Mammary epithelial cell (primary cell): ENCODE measurements at regions of chr5 and their contacts with region 1.

Region 1: GRCh38 chr5:90529194-90529938 is at the start of gene LYSMD3:
- DNase-seq: peak; percentile 96
- H3K4me3 ChIP-seq: peak within 1 kb of the TSS; percentile 92 to 98 (median 98)
- H3K27ac ChIP-seq: peak within 1 kb of the TSS; percentile 80
- H3K4me1 ChIP-seq: peaks cover 18% of the 10 kb centered on the region
- H3K27me3 ChIP-seq: peaks cover 3% of the 10 kb centered on the region
- CTCF ChIP-seq: no peak
- total RNA-seq, gene LYSMD3: 16.8 to 18.7 TPM

Region 2: DNA sequence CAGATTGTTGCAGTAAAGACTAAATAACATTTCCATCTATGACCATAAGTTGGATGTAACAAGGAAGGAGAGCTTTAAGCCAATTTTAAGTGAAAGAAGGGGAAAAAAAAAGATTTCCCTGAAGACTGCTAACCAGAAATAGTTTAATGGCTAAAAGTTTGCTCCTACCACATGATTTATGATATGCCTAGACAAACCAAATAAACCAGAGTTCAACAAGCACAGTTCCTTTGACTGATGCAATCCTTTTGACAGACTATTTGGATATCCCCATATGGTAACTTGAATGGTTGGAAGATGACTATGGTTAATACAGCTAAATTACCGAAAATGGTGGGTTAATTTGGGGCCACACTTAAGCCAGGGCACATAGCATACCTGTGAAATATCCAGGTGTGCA is 458.3 kb before region 1 on chr5:
- CTCF ChIA-PET with region 1: no interaction called
- dilution Hi-C with region 1: no loop called
- in situ Hi-C with region 1: no loop called
- intact Hi-C with region 1: no loop called
- DNase-seq: no peak
- H3K4me3 ChIP-seq: no peak overlapping the region
- H3K27ac ChIP-seq: no peak overlapping the region
- H3K4me1 ChIP-seq: no peaks in the 10 kb centered on the region
- H3K27me3 ChIP-seq: no peaks in the 10 kb centered on the region
- CTCF ChIP-seq: no peak

Region 3: DNA sequence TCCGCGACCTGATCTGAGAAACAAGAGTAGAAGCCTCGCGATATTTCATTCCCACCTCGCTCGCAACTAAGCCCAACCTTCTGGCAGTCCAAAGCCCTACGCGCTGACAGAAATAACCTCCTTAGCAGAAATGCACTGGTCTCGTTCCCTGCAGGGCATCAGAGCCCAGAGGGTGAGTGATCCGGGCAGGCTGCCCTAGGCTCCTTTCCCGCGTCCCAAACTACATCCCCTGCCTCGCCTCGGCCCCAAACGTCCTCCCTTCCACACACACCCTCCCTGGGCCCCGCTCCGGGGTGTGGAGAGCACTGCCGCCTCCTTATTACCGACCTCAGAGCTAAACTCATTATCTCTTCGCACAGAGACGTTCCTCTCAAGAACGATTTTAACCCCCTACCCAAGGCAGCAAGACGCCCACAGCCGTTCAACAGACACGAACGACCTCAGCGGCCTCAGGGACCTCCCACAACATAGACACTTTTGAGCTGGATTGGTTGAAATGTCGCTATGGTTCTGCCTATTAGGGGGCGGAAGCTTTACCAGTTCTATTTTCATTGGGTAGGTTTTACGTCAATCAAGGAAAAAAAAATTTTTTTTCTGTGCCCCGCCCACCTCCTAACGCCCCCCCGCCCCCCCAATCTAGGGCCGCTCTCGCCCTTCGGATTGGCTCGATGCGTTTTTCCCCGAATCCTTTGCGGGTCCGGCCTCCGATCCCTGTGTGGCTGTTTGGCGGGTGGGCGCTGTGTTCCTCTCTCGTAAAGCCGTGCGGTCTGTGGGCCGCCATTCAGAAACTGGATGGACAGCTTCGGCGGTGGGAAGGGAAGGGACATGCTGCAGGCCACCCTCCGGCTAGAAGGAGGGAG is 119.8 kb before region 1 on chr5 and contains the start of gene CETN3:
- CTCF ChIA-PET with region 1: no interaction called
- dilution Hi-C with region 1: no loop called
- in situ Hi-C with region 1: no loop called
- intact Hi-C with region 1: loop called (anchors 10 kb)
- DNase-seq: peak; percentile 92
- H3K4me3 ChIP-seq: peak within 1 kb of the TSS; percentile 88 to 100 (median 97)
- H3K27ac ChIP-seq: peak within 1 kb of the TSS; percentile 77
- H3K4me1 ChIP-seq: peaks cover 12% of the 10 kb centered on the region
- H3K27me3 ChIP-seq: no peaks in the 10 kb centered on the region
- CTCF ChIP-seq: no peak
- total RNA-seq, gene CETN3: 9.0 to 28.3 TPM

Region 4: DNA sequence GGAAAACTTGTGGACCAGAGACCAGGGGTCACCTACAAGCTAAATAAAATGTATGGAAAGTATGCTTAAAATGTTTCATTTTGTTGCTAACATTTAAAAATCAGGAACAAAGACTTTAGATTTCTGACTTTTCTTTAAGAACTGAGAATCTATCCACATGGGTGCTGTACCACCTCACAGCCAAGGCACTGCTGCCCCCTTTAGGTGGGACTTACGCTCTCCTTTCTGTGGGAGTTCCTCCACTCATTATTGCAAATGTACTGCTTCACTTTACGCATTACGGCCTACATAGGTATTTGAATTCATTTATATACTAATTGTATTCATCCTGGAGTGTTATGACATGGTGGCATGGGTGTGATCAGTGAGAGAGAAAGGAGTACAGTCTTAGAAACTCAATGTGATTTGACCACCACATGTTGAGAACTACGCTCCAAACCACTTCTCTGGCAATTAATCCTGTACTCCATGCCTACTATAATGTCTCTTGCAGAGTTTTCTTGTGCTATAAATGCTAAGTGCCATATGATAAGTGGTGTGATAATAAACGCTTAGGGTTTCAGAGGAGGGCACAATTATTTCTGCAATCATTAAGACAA is 95.2 kb before region 1 on chr5:
- CTCF ChIA-PET with region 1: no interaction called
- dilution Hi-C with region 1: no loop called
- in situ Hi-C with region 1: loop called (anchors 10 to 25 kb)
- intact Hi-C with region 1: loop called (anchors 1 kb)
- DNase-seq: peak; percentile 3
- H3K4me3 ChIP-seq: no peak overlapping the region
- H3K27ac ChIP-seq: no peak overlapping the region
- H3K4me1 ChIP-seq: no peaks in the 10 kb centered on the region
- H3K27me3 ChIP-seq: no peaks in the 10 kb centered on the region
- CTCF ChIP-seq: peak; percentile 51 to 55

Region 5: DNA sequence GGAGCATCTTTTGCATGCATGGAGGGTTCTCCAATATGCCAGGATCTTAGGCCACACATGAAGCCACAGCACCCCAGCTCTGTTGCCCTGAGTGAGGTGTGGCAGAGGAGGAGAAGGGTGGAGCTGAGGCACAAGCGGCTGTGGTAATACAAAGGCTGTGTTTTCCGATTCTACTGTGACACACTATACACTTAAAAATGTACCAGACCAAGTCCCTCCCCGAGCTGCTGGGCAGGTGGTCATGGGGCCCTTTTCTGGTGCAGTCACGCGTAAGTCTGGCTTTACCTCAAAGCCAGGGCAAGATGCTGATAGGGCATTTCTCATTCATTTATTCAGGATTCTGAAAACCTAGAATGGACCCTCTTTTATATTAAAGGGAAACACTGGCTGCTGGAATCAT is 33.0 kb after region 1 on chr5:
- CTCF ChIA-PET with region 1: no interaction called
- dilution Hi-C with region 1: no loop called
- in situ Hi-C with region 1: no loop called
- intact Hi-C with region 1: no loop called
- DNase-seq: no peak
- H3K4me3 ChIP-seq: no peak overlapping the region
- H3K27ac ChIP-seq: no peak overlapping the region
- H3K4me1 ChIP-seq: peaks cover 9% of the 10 kb centered on the region
- H3K27me3 ChIP-seq: peaks cover 11% of the 10 kb centered on the region
- CTCF ChIP-seq: no peak